ENCODE measurements at regions of chr7 and their contacts with region 1.

Region 1: DNA sequence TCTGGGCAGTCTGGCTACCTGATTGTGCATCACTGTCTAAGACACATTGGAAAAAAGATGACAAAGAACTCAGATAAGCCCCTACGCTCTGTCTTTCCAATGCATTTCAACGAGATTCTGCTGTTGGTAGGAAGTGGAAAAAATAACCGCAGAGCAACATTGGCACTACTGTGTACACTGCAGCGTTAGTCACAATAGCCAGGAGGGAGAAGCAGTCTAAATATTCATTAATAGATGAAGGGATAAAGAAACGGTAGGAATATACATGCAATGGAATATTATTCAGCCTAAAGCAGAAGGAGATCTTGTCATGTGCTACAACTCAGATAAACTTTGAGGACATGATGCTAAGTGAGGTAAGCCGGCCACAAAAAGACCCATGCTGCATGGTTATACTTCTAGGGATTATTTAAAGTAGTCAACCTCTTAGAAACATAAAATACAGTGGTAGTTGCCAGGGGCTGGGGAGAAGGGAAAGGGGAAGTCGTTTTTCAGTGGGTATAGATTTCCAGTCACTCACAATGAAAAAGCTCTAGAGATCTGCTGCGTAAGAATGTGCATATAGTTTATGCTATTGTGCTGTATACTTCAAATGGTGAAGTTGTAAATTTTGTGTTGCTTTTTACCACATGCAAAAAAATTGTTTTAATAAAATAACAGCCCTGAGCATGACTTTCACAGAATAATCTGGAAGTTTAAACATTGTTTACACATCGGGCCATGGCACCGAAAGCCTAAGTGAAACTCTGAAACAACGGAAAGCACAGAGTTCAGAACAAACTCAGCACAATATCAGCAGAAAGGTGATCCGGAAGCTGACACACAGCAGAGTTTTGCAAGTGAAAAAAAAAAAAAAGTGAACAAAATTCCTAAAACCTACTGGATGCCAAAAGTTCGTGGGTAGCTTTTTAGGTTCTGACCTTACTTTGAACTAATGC is 40.1 kb downstream of the ELMO1 start:
- DNase-seq: peak; percentile 34
- H3K4me3 Mint-ChIP-seq: peak overlapping the region; percentile 70
- H3K27ac Mint-ChIP-seq: peak overlapping the region; percentile 96
- H3K4me1 Mint-ChIP-seq: peaks cover 86% of the 10 kb centered on the region
- H3K27me3 Mint-ChIP-seq: no peaks in the 10 kb centered on the region

Region 2: GRCh38 chr7:37365405-37365804 is 43.2 kb before region 1 on chr7:
- CTCF ChIA-PET with region 1: no interaction called
- POLR2A ChIA-PET with region 1: interaction called, 4 read pairs
- intact Hi-C with region 1: loop called (anchors 1 kb)
- DNase-seq: no peak
- H3K4me3 Mint-ChIP-seq: no peak overlapping the region
- H3K27ac Mint-ChIP-seq: peak overlapping the region; percentile 98
- H3K4me1 Mint-ChIP-seq: peaks cover 86% of the 10 kb centered on the region
- H3K27me3 Mint-ChIP-seq: no peaks in the 10 kb centered on the region

Region 3: GRCh38 chr7:37395618-37396259 is 12.8 kb before region 1 on chr7:
- CTCF ChIA-PET with region 1: no interaction called
- POLR2A ChIA-PET with region 1: interaction called, 3 read pairs
- intact Hi-C with region 1: loop called (anchors 1 kb)
- DNase-seq: no peak
- H3K4me3 Mint-ChIP-seq: no peak overlapping the region
- H3K27ac Mint-ChIP-seq: peak overlapping the region; percentile 85
- H3K4me1 Mint-ChIP-seq: peaks cover 78% of the 10 kb centered on the region
- H3K27me3 Mint-ChIP-seq: no peaks in the 10 kb centered on the region